ENCODE measurements at regions of chr7 and their contacts with region 1.

Region 1: DNA sequence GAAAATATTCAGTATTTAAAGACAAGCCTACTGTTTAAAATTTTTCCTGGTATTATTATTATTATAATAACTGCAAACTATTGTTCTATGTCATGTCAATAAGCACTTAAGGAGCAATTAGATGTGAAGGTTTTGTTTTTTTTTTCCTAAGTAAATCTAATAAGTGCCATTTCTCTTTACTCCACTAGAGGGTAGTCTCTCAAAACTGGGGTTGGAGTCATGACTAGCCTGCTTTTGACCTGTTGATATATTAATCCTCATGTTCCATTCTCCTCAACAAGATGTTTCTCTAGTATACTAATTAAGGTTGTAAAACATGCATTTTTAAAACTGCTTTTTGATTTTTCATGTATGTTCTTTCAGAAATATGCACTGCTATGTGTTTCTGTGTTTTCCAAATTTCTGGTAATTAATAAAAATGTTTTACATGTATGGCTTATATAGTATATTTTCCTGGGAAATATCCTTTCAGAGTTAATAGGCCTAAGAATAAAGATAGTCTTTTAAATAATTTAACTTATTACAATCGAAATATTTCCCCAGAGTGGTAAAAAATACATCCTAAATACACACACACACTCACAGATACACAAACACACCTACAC is 1.0 kb upstream of the LRRN3 start:
- DNase-seq: no peak
- ATAC-seq: peak; percentile 78
- H3K4me3 ChIP-seq: no peak overlapping the region
- H3K27ac ChIP-seq: no peak overlapping the region
- H3K4me1 ChIP-seq: peaks cover 0 to 4% of the 10 kb centered on the region in 2 donors
- H3K27me3 ChIP-seq: no peaks in the 10 kb centered on the region

Region 2: DNA sequence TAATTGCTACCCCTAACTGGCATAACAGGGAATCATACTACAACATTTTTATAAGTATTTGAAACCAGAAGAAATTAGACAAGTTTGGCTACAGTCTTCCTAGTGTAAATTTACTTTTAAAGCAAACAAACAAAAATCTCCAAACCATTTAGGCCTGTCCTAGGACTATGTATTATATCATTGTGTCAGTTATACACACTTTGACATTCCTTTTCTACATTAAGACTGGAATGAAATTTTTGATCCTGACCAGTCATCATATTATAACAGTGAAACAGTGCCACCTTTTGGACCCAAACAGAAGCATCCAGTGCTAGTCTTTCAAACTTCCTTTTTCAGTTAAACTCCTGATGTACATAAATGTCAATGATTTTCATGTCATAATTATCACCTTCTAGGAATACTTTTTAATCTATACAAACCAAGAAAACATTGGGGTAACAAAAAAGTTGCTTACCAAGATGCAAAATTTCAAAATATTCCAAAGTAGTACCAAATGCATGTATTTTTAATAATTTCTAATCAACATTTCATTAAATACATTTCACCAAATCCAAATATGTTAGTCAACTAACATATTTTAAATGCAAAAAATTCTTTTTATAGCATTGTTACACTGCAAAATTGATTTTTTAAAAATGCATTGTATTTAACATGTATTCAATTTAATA is 396.7 kb after region 1 on chr7:
- intact Hi-C with region 1: loop called (anchors 5 kb)
- DNase-seq: no peak
- ATAC-seq: no peak
- H3K4me3 ChIP-seq: no peak overlapping the region
- H3K27ac ChIP-seq: no peak overlapping the region
- H3K4me1 ChIP-seq: no peaks in the 10 kb centered on the region
- H3K27me3 ChIP-seq: no peaks in the 10 kb centered on the region

Region 3: GRCh38 chr7:111730476-111731300 is 640.8 kb after region 1 on chr7:
- intact Hi-C with region 1: loop called in 1 of 2 experiments (anchors 5 kb)
- DNase-seq: no peak
- ATAC-seq: no peak
- H3K4me3 ChIP-seq: no peak overlapping the region
- H3K27ac ChIP-seq: no peak overlapping the region
- H3K4me1 ChIP-seq: peaks cover 0 to 1% of the 10 kb centered on the region in 2 donors
- H3K27me3 ChIP-seq: no peaks in the 10 kb centered on the region

Measured in aorta (tissue), 5 donors.